Activated T-helper 1 cell treated with anti-CD3 and anti-CD28 coated beads, Interleukin-12 subunit alpha, Interleukin-12 subunit beta, Interleukin-2, Interleukin-4 antibody, amounts not matched to agents 30 ng/mL and 10 ng/mL and 1 ng/mL, durations not matched to agents 14 hours and 24 hours and 36 hours (primary cell): ENCODE measurements at regions of chr17 and their contacts with region 1.

Region 1: GRCh38 chr17:55348749-55349354 is 72.8 kb downstream of the MMD start:
- DNase-seq: peak; percentile 12
- H3K4me3 Mint-ChIP-seq: no peak overlapping the region
- H3K27ac Mint-ChIP-seq: no peak overlapping the region
- H3K4me1 Mint-ChIP-seq: peaks cover 41% of the 10 kb centered on the region
- H3K27me3 Mint-ChIP-seq: peaks cover 15% of the 10 kb centered on the region

Region 2: DNA sequence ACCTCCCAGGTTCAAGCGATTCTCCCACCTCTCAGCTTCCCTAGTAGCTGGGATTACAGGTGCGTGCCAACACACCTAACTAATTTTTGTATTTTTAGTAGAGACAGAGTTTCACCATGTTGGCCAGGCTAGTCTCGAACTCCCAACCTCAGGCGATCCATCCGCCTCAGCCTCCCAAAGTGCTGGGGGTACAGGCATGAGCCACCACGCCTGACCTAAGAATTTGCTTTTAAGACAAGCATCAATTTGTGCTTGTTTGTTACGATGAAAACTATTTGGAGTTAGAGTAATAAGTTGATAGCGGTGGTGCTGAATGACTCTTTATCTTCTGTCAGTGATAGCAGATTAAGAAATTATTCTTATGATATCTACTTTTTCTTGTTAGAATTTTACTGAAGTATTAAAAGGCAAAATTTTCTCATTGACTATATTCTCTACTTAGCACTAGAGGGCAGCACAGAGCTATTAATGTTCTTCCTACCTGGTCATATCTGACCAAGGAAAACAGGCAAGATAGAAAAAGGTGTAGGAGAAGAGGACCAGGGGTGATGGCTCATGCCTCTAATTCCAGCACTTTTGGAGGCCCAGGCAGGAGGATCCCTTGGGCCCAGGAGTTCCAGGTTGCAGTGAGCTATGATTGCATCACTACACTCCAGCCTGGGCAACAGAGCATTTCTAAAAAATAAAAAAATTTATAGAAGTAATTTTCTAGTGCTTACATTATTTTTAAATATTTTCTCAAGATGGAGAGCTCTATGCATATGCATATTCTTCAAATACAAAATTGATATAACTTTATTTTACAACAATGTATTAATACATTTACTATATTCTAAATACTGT is 355.8 kb before region 1 on chr17:
- intact Hi-C with region 1: loop called (anchors 1 kb)
- DNase-seq: no peak
- H3K4me3 Mint-ChIP-seq: no peak overlapping the region
- H3K27ac Mint-ChIP-seq: no peak overlapping the region
- H3K4me1 Mint-ChIP-seq: peaks cover 4% of the 10 kb centered on the region
- H3K27me3 Mint-ChIP-seq: no peaks in the 10 kb centered on the region

Region 3: GRCh38 chr17:55090079-55090492 is 258.8 kb before region 1 on chr17:
- intact Hi-C with region 1: loop called (anchors 5 kb)
- DNase-seq: peak; percentile 59
- H3K4me3 Mint-ChIP-seq: peak overlapping the region; percentile 46
- H3K27ac Mint-ChIP-seq: peak overlapping the region; percentile 86
- H3K4me1 Mint-ChIP-seq: peaks cover 19% of the 10 kb centered on the region
- H3K27me3 Mint-ChIP-seq: no peaks in the 10 kb centered on the region

Region 4: DNA sequence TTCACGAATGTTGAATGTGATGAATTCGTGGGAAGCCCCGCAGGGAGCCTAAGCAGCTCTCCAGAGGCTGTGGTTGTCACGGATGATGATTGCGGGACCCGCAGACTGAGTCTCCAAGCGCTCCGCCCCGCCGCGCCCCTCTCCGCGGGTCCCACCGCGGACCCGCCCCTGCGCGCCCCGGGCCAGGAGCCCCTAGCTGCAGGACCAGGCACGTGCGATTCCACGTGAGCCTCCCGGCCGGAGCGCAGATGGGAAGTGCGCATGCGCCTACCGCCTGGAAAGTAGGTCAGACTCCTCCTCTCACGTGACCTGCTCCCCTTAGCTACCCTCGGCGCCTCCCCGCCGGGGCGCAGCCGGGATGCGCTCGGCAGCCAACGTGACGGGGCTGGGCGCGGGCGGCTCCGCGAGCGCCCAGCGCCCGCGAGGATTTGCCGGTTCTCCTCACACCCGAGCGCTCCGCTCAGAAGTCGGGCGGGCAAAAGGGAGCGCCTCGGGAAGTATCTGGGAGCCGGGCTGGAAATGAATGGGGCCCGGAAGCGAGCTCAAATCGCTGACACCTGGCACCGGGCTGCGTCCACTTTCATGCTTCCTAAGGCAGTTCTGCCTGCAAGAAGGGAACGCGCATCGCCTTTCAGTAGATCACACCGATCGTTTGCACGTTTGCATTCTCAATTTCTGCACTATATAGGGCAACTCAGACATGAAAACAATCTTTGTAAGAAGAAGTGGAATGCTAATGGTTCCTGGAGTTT is 110.5 kb before region 1 on chr17:
- intact Hi-C with region 1: loop called (anchors 2 kb)
- DNase-seq: peak; percentile 75
- H3K4me3 Mint-ChIP-seq: peak overlapping the region; percentile 81
- H3K27ac Mint-ChIP-seq: peak overlapping the region; percentile 69
- H3K4me1 Mint-ChIP-seq: peaks cover 17% of the 10 kb centered on the region
- H3K27me3 Mint-ChIP-seq: peaks cover 34% of the 10 kb centered on the region

Region 5: DNA sequence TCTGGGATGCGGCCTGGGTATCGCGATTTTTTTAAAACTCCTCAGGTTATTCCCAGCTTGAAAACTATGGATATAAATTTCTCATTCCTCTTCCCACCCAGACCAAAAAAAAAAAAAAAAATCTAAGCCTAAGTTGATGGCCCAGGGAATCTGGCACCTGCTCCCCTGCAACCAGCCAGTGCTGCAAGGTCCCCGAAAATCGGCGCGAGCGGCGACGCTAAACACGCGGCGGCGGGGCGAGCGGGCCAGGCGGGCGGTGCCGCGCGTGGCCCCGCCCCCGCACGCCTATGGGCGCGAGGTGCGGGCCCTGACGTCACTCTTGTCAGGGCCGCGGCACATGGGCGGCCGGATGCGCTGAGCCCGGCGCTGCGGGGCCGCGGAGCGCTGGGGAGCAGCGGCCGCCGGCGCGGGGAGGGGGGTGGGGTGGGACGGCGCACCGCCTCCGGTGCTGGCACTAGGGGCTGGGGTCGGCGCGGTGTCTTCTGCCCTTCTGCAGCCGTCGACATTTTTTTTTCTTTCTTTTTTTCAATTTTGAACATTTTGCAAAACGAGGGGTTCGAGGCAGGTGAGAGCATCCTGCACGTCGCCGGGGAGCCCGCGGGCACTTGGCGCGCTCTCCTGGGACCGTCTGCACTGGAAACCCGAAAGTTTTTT is 84.1 kb before region 1 on chr17 and contains the start of gene HLF:
- intact Hi-C with region 1: loop called (anchors 2 kb)
- DNase-seq: peak; percentile 72
- H3K4me3 Mint-ChIP-seq: peak within 1 kb of the TSS; percentile 69
- H3K27ac Mint-ChIP-seq: no peak within 1 kb of the TSS
- H3K4me1 Mint-ChIP-seq: peaks cover 14% of the 10 kb centered on the region
- H3K27me3 Mint-ChIP-seq: peaks cover 81% of the 10 kb centered on the region
- total RNA-seq, gene HLF: 0.36 and 0.54 TPM in 2 replicates